ENCODE measurements at regions of chr1 and their contacts with region 1.

Region 1: GRCh38 chr1:198556971-198557370 is 16.5 kb upstream of the ATP6V1G3 start:
- DNase-seq: peak; percentile 92
- H3K4me3 ChIP-seq: peak overlapping the region; percentile 28
- H3K27ac ChIP-seq: peak overlapping the region; percentile 32
- H3K4me1 ChIP-seq: peaks cover 31% of the 10 kb centered on the region
- CTCF ChIP-seq: no peak

Region 2: DNA sequence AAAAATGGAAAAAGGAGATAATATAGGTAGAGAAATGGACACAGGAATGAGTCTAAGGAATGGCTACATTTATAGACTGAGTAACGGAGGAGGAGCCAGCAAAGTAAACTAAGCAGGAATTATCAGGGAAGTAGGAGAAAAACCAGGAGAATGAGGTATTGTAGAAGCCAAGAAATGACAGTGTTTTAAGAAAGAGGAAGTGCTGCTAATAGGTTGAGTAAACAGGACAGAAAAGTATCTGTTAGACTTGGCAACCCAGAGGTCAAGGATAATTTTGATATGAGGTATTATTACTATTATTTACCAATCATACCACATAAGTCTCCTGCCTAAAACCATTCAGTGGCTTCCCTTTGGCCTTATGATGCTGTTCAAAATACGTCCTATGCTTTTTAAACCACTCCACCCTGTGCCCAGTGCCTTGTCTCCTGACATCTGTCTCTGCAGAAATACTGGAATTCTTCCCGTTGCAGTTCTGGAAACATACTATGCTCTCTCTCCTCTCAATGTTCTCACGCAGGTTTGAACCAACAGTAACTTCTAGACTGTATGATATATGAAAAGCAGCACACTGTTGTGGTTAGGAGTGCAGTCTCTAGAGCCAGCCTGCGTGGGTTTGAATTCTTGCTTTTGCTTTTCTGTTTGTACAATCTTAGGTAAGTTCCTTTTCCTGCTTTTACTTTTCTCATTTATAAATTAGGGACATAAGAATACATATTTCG is 424.8 kb before region 1 on chr1:
- CTCF ChIA-PET with region 1: no interaction called
- POLR2A ChIA-PET with region 1: no interaction called
- intact Hi-C with region 1: no loop called
- DNase-seq: no peak
- H3K4me3 ChIP-seq: no peak overlapping the region
- H3K27ac ChIP-seq: no peak overlapping the region
- H3K4me1 ChIP-seq: no peaks in the 10 kb centered on the region
- CTCF ChIP-seq: no peak

Region 3: GRCh38 chr1:198534548-198535418 is 22.2 kb before region 1 on chr1:
- CTCF ChIA-PET with region 1: no interaction called
- POLR2A ChIA-PET with region 1: interaction called, 14 read pairs
- intact Hi-C with region 1: no loop called
- DNase-seq: peak; percentile 29
- H3K4me3 ChIP-seq: peak overlapping the region; percentile 14
- H3K27ac ChIP-seq: peak overlapping the region; percentile 41
- H3K4me1 ChIP-seq: peaks cover 62% of the 10 kb centered on the region
- CTCF ChIP-seq: no peak

Region 4: GRCh38 chr1:198543670-198544260 is 13.2 kb before region 1 on chr1:
- CTCF ChIA-PET with region 1: no interaction called
- POLR2A ChIA-PET with region 1: interaction called, 11 read pairs
- intact Hi-C with region 1: no loop called
- DNase-seq: peak; percentile 58
- H3K4me3 ChIP-seq: peak overlapping the region; percentile 41
- H3K27ac ChIP-seq: peak overlapping the region; percentile 71
- H3K4me1 ChIP-seq: peaks cover 54% of the 10 kb centered on the region
- CTCF ChIP-seq: no peak

Measured in OCI-LY7 (cell line).